Activated CD4-positive, alpha-beta T cell treated with anti-CD3 and anti-CD28 coated beads for 36 hours (primary cell): ENCODE measurements at regions of chr22 and their contacts with region 1.

Region 1: DNA sequence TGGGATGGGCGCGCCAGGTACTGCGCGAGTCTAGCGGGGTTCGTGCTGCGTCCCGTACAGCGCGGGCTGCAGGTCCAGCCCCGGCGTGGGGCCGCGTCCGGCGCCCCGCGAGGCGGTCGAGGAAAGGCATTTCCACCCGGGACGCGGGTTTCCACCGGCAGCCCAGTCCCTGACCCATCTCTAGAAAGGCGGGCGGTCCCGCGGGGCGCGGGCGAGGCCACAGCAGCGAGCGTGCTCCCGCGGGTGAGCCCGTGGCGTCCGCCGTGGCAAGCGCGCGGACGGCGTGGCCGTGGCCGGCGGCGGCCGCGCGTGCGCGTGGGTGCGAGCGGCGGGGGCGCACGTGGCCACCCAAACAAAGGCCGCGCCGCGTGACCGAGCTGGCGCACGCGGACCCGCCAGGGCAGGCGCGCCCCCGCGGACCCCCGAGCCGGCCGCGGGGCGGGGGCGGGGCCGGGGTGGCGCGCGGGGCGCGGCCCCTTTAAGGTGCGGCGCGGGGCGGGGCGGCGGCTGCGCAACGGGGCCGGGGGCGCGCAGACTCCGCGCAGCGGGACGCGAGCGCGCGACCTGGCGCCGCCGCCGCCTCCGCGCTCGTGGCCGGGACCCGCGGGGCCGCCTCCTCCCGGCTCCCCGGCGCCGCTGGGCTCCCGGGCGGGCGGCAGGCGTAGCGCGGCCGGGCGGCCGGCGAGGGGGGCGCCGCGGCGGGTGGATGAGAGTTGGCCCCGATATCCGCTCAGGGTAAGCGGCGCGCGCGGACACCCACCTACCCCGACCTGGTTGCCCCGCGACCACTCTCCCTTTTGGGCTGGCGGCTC is 39.3 kb upstream of the CELSR1 start:
- DNase-seq: peak; percentile 72
- ATAC-seq: peak; percentile 72
- H3K4me3 Mint-ChIP-seq: peak overlapping the region; percentile 73
- H3K27ac Mint-ChIP-seq: no peak overlapping the region
- H3K4me1 Mint-ChIP-seq: peaks cover 38% of the 10 kb centered on the region
- H3K27me3 Mint-ChIP-seq: no peaks in the 10 kb centered on the region

Region 2: DNA sequence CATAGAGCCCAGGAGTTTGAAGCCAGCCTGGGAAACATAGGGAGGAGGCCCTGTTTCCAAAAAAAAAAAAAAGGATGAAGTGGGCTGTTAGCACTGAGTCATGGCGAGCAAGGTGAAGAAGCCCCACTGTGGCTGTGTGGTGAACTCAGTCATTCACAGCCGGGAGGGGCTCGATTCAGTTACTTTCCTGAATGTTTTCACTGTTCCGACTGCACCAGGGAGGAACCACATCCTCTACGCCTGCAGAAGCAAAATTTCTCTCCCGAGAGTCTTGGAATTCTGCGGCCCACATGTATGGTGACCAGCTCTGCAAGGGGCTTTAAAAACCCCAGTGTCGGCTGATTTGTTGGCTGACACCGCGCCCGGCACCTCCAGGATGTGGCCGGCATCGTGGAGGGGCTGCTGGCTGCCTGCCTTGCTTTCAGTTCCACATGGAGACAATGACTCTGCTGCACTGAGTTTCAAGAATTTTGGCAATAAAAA is 15.7 kb after region 1 on chr22:
- CTCF ChIA-PET with region 1: interaction called, 3 read pairs
- POLR2A ChIA-PET with region 1: no interaction called
- intact Hi-C with region 1: loop called in 1 of 2 experiments (anchors 1 kb)
- DNase-seq: peak; percentile 80
- ATAC-seq: peak; percentile 77
- H3K4me3 Mint-ChIP-seq: peak overlapping the region; percentile 47
- H3K27ac Mint-ChIP-seq: peak overlapping the region; percentile 85
- H3K4me1 Mint-ChIP-seq: peaks cover 25% of the 10 kb centered on the region
- H3K27me3 Mint-ChIP-seq: no peaks in the 10 kb centered on the region

Region 3: DNA sequence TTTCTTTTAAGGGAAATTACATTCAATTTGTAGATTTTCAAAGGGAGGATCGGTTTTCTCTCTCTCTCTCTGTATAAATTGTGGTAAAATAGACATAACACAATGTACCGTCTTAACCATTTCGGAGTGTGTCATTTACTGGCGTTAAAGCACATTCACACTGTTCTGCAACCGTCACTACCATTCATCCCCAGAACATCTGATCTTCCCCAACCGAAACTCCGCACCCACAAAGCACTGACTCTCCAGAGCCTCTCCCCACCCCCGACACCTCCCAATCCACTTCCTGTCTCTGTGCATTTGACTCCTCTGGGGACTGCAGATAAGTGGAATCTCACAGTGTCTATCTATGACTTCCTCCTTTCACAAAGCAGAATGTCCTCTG is 27.5 kb after region 1 on chr22:
- CTCF ChIA-PET with region 1: no interaction called
- POLR2A ChIA-PET with region 1: no interaction called
- intact Hi-C with region 1: loop called in 1 of 2 experiments (anchors 1 kb)
- DNase-seq: peak; percentile 91
- ATAC-seq: peak; percentile 99
- H3K4me3 Mint-ChIP-seq: peak overlapping the region; percentile 64
- H3K27ac Mint-ChIP-seq: peak overlapping the region; percentile 99
- H3K4me1 Mint-ChIP-seq: peaks cover 16% of the 10 kb centered on the region
- H3K27me3 Mint-ChIP-seq: no peaks in the 10 kb centered on the region

Region 4: GRCh38 chr22:46613606-46614021 is 36.9 kb after region 1 on chr22:
- CTCF ChIA-PET with region 1: no interaction called
- POLR2A ChIA-PET with region 1: no interaction called
- intact Hi-C with region 1: loop called in 1 of 2 experiments (anchors 5 kb)
- DNase-seq: peak; percentile 58
- ATAC-seq: peak; percentile 42
- H3K4me3 Mint-ChIP-seq: peak overlapping the region; percentile 80
- H3K27ac Mint-ChIP-seq: peak overlapping the region; percentile 94
- H3K4me1 Mint-ChIP-seq: peaks cover 28% of the 10 kb centered on the region
- H3K27me3 Mint-ChIP-seq: no peaks in the 10 kb centered on the region

Region 5: DNA sequence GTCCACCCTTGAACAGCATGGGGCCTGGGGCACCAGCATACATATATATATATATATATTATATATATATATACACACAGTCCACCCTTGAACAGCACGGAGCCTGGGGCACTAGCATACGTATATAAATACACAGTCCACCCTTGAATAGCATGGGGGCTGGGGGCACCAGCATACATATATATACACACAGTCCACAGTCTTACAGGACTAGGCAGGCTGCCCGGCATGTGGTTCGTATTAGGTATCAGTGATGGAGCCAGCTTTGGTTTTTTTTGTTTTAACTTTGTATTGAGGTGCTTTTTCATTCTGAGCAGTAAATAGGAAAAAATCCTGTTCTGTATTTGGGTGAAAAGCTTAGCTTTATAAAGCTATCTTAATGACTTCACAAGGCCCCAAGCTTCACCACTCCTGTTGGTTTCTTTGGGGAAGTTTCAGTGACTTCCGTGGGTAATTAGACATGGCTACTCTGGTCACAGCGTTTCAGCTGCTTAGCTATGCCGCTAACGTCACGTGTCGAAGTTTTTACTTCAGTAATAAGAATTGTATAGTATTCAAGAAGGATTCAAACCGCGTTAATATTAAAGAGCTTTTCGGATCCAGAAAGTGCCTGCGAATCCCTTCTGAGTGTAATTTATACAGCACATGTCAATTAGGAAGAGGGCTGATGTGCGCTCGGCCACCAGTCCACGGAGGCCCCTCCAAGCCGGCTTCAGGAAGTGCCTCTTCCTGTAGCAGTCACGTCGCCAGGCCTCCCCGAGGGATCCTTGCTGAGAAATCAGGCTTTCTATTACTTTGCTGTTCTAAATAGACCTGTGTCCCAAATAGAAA is 365.4 kb after region 1 on chr22:
- CTCF ChIA-PET with region 1: no interaction called
- POLR2A ChIA-PET with region 1: no interaction called
- intact Hi-C with region 1: no loop called
- DNase-seq: no peak
- ATAC-seq: no peak
- H3K4me3 Mint-ChIP-seq: no peak overlapping the region
- H3K27ac Mint-ChIP-seq: no peak overlapping the region
- H3K4me1 Mint-ChIP-seq: peaks cover 6% of the 10 kb centered on the region
- H3K27me3 Mint-ChIP-seq: no peaks in the 10 kb centered on the region